ENCODE measurements at regions of chr7 and their contacts with region 1.

Region 1: DNA sequence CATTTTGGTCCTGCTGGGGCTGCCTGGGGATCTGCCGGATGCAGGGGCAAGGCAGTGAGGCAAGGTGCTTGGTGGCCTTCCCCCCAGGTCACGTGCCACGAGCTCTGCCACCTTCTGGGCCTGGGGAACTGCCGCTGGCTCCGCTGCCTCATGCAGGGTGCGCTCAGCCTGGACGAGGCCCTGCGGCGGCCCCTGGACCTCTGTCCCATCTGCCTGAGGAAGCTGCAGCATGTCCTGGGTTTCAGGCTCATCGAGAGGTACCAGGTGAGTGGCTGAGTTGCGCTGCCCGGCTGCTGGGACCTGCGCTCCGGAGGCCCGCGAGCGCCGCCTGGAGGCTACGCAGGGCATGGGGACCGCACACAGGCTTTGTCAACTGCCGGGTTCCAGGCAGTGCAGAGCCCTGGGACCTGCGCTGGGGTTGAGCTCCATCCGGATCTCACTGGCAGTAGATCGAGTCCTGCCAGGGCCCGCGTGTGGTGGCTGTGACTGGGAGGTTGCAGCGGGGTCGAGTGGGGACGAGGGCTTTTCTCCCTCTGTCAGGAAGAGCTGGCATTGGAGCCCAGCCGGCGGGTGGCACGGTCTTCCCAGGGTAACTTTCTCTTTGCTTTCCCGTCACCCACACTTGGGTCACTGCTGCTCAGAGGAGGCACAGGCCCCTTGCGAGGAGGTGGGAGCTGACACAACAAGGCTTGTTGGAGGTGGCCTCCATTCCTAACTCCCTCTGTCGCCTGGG is 21.7 kb downstream of the AMZ1 start:
- DNase-seq: peak; percentile 91
- ATAC-seq: peak; percentile 74
- H3K4me3 ChIP-seq: peak overlapping the region in 4 of 5 experiments; percentile 44 to 77 (median 60)
- H3K4me3 Mint-ChIP-seq: peak overlapping the region; percentile 92
- H3K27ac ChIP-seq: peak overlapping the region; percentile 93 to 95
- H3K27ac Mint-ChIP-seq: peak overlapping the region; percentile 97
- H3K4me1 ChIP-seq: peaks cover 30 to 45% of the 10 kb centered on the region in 2 donors
- H3K4me1 Mint-ChIP-seq: peaks cover 47% of the 10 kb centered on the region
- H3K27me3 ChIP-seq: no peaks in the 10 kb centered on the region
- H3K27me3 Mint-ChIP-seq: no peaks in the 10 kb centered on the region
- CTCF ChIP-seq: peak; percentile 94

Region 2: GRCh38 chr7:2451171-2452073 is 258.3 kb before region 1 on chr7:
- CTCF ChIA-PET with region 1: interaction called, 50 read pairs
- POLR2A ChIA-PET with region 1: no interaction called
- intact Hi-C with region 1: loop called (anchors 2 kb)
- DNase-seq: peak; percentile 83
- ATAC-seq: peak; percentile 96
- H3K4me3 ChIP-seq: peak overlapping the region in 4 of 5 experiments; percentile 34 to 56 (median 50)
- H3K4me3 Mint-ChIP-seq: peak overlapping the region; percentile 80
- H3K27ac ChIP-seq: no peak overlapping the region
- H3K27ac Mint-ChIP-seq: peak overlapping the region; percentile 26
- H3K4me1 ChIP-seq: peaks cover 8 to 11% of the 10 kb centered on the region in 2 donors
- H3K4me1 Mint-ChIP-seq: peaks cover 10% of the 10 kb centered on the region
- H3K27me3 ChIP-seq: no peaks in the 10 kb centered on the region
- H3K27me3 Mint-ChIP-seq: no peaks in the 10 kb centered on the region
- CTCF ChIP-seq: peak; percentile 91

Region 3: GRCh38 chr7:2529161-2530070 is 180.3 kb before region 1 on chr7:
- CTCF ChIA-PET with region 1: interaction called, 7 read pairs
- POLR2A ChIA-PET with region 1: interaction called, 7 read pairs
- intact Hi-C with region 1: loop called (anchors 5 kb)
- DNase-seq: peak; percentile 94
- ATAC-seq: peak; percentile 65
- H3K4me3 ChIP-seq: peak overlapping the region in 4 of 5 experiments; percentile 38 to 52 (median 43)
- H3K4me3 Mint-ChIP-seq: peak overlapping the region; percentile 90
- H3K27ac ChIP-seq: peak overlapping the region; percentile 97
- H3K27ac Mint-ChIP-seq: peak overlapping the region; percentile 99
- H3K4me1 ChIP-seq: peaks cover 66 to 74% of the 10 kb centered on the region in 2 donors
- H3K4me1 Mint-ChIP-seq: peaks cover 67% of the 10 kb centered on the region
- H3K27me3 ChIP-seq: no peaks in the 10 kb centered on the region
- H3K27me3 Mint-ChIP-seq: no peaks in the 10 kb centered on the region
- CTCF ChIP-seq: no peak

Region 4: DNA sequence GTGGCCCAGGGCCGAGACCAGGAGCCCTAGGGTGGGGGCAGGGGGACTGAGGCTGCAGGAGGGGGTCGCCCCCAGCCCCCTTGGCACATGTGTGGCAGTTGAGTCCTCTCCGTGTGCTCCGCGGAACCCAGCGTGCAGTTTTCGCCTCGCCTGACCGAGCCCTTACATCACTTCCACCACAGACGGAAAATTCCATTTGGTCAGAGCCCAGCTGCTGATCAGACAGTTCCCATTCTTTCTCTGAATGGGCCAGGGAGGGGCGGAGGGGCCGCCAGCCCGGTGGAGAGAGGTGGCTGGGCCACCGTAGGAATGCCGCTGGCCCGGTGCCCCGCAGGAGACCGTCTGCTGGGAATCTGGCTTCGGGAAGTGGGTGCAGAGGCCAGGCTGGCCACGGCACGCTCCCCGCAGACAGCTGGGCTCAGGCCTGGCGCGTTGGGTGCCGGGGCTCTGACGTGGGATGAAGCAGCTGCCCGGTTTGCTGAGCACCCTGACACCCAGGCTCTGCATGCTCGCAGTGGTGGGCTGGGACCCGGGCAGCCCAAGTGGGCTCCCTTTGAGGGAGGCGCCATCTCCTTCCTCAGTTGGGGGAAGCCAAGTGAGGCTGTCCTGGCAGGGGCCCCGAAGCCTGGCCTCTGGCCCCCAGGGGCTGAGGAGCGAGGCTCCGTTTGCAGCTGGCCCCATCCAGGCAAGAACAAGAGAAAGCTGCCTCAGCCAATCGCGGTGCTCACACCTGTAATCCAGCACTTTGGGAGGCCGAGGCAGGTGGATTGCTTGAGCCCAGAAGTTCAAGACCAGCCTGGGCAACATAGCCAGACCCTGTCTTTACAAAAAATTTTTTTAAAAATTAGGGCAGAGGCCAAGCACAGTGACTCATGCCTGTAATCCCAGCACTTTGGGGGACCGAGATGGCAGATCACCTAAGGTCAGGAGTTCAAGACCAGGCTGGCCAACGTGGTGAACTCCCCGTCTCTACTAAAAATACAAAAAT is 68.0 kb before region 1 on chr7:
- CTCF ChIA-PET with region 1: interaction called, 3 read pairs
- POLR2A ChIA-PET with region 1: interaction called, 7 read pairs
- intact Hi-C with region 1: loop called (anchors 2 kb)
- DNase-seq: peak; percentile 81
- ATAC-seq: peak; percentile 59
- H3K4me3 ChIP-seq: peak overlapping the region in 4 of 5 experiments; percentile 7 to 36 (median 16)
- H3K4me3 Mint-ChIP-seq: peak overlapping the region; percentile 71
- H3K27ac ChIP-seq: peak overlapping the region; percentile 63 to 69
- H3K27ac Mint-ChIP-seq: peak overlapping the region; percentile 92
- H3K4me1 ChIP-seq: peaks cover 59 to 87% of the 10 kb centered on the region in 2 donors
- H3K4me1 Mint-ChIP-seq: peaks cover 63% of the 10 kb centered on the region
- H3K27me3 ChIP-seq: no peaks in the 10 kb centered on the region
- H3K27me3 Mint-ChIP-seq: no peaks in the 10 kb centered on the region
- CTCF ChIP-seq: no peak

Region 5: GRCh38 chr7:2698581-2699288 is 11.0 kb before region 1 on chr7:
- CTCF ChIA-PET with region 1: interaction called, 72 read pairs
- POLR2A ChIA-PET with region 1: interaction called, 24 read pairs
- intact Hi-C with region 1: loop called (anchors 1 kb)
- DNase-seq: peak; percentile 60
- ATAC-seq: peak; percentile 89
- H3K4me3 ChIP-seq: peak overlapping the region in 3 of 5 experiments; percentile 20 to 35 (median 34)
- H3K4me3 Mint-ChIP-seq: peak overlapping the region; percentile 77
- H3K27ac ChIP-seq: no peak overlapping the region
- H3K27ac Mint-ChIP-seq: peak overlapping the region; percentile 84
- H3K4me1 ChIP-seq: peaks cover 13 to 18% of the 10 kb centered on the region in 2 donors
- H3K4me1 Mint-ChIP-seq: peaks cover 21% of the 10 kb centered on the region
- H3K27me3 ChIP-seq: peaks cover 0 to 18% (median 0%) of the 10 kb centered on the region in 4 experiments
- H3K27me3 Mint-ChIP-seq: no peaks in the 10 kb centered on the region
- CTCF ChIP-seq: no peak

Region 6: DNA sequence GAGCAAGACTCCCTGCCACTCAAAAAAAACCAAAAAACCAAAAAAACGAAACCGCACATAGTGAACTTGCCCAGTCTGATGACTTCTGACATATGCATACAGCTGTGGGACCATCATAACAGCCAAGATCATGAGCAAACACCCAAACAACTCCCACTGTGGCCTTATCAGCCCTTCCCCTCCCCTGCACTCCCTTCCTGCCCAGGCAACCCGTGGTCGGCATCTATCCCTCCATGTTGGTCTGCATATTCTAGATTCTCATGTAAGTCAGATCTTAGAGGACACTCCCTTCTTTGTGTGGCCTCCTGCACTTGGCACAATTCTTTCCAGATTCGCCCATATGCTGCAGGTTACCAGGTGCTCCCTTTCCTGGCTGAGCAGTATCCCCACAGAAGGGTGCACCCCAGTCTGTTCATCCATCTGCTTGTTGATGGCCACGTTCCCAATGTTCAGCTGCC is 61.6 kb after region 1 on chr7:
- CTCF ChIA-PET with region 1: no interaction called
- POLR2A ChIA-PET with region 1: no interaction called
- intact Hi-C with region 1: loop called (anchors 1 kb)
- DNase-seq: no peak
- ATAC-seq: no peak
- H3K4me3 ChIP-seq: no peak overlapping the region
- H3K4me3 Mint-ChIP-seq: peak overlapping the region; percentile 60
- H3K27ac ChIP-seq: no peak overlapping the region
- H3K27ac Mint-ChIP-seq: peak overlapping the region; percentile 80
- H3K4me1 ChIP-seq: peaks cover 15 to 19% of the 10 kb centered on the region in 2 donors
- H3K4me1 Mint-ChIP-seq: peaks cover 46% of the 10 kb centered on the region
- H3K27me3 ChIP-seq: no peaks in the 10 kb centered on the region
- H3K27me3 Mint-ChIP-seq: no peaks in the 10 kb centered on the region
- CTCF ChIP-seq: no peak

Region 7: DNA sequence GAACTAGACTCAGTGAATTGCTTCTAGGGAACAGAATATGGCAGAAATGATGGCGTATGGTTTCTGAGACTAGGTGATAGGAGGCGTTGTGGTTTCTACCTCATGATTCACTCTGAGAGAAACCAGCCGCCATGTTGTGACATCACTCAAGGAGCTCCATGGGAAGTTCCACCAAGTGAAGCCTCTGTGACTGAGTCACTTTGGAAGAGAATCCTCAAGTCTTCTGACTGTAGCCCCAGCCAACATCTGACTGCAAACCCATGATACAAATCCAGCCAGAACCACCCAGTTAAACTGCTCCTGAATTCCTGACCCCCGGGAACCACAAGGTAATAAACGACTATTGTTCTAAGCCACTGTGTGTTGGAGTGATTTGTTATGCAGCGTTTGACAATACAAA is 425.0 kb after region 1 on chr7:
- CTCF ChIA-PET with region 1: no interaction called
- POLR2A ChIA-PET with region 1: no interaction called
- intact Hi-C with region 1: no loop called
- DNase-seq: no peak
- ATAC-seq: no peak
- H3K4me3 ChIP-seq: no peak overlapping the region
- H3K4me3 Mint-ChIP-seq: no peak overlapping the region
- H3K27ac ChIP-seq: no peak overlapping the region
- H3K27ac Mint-ChIP-seq: no peak overlapping the region
- H3K4me1 ChIP-seq: no peaks in the 10 kb centered on the region
- H3K4me1 Mint-ChIP-seq: no peaks in the 10 kb centered on the region
- H3K27me3 ChIP-seq: no peaks in the 10 kb centered on the region
- H3K27me3 Mint-ChIP-seq: peaks cover 17% of the 10 kb centered on the region
- CTCF ChIP-seq: no peak

Measured in B cell (primary cell).